Gastrocnemius medialis (tissue), 4 donors: ENCODE measurements at regions of chr22 and their contacts with region 1.

Region 1: DNA sequence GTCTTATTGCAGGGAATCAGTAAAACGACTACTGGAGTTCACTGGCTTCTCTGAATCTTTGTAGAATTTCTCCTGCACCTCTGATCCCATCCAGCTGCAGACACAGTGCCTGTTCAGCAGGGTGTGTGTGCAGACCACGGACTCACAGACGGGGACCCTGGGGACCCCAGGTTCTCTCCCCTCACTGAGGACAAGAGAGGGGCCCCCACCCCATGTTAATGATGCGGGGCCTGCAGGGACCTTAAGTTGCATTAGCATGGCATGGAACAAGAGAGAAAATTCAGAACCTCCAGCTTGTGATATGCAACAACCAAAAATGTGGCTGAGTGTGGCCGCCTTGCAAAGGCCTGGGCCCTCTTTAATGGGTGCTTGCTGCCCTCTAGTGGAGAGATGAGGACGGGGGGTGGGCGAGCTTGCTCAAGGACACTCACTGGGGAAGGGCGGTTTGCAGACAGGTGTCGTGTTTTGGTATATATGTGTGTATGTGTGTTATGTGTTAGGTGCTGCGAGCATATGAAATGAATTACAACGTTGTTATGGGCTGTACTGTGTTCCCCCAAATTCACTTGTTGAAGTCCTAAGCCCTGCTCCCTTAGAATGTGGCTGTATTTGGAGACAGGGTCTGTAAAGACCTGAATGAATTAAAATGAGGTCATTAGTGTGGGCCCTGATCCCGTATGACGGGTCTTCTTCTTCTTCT is 84.4 kb upstream of the SEPTIN5 start:
- DNase-seq: peak; percentile 38 to 54
- ATAC-seq: peak; percentile 88 to 91
- H3K4me3 ChIP-seq: no peak overlapping the region
- H3K27ac ChIP-seq: no peak overlapping the region
- H3K4me1 ChIP-seq: no peaks in the 10 kb centered on the region
- H3K27me3 ChIP-seq: peaks cover 0 to 2% (median 0%) of the 10 kb centered on the region in 3 donors
- CTCF ChIP-seq: peak; percentile 85 to 94 (median 92)
- POLR2A ChIP-seq: no peak

Region 2: DNA sequence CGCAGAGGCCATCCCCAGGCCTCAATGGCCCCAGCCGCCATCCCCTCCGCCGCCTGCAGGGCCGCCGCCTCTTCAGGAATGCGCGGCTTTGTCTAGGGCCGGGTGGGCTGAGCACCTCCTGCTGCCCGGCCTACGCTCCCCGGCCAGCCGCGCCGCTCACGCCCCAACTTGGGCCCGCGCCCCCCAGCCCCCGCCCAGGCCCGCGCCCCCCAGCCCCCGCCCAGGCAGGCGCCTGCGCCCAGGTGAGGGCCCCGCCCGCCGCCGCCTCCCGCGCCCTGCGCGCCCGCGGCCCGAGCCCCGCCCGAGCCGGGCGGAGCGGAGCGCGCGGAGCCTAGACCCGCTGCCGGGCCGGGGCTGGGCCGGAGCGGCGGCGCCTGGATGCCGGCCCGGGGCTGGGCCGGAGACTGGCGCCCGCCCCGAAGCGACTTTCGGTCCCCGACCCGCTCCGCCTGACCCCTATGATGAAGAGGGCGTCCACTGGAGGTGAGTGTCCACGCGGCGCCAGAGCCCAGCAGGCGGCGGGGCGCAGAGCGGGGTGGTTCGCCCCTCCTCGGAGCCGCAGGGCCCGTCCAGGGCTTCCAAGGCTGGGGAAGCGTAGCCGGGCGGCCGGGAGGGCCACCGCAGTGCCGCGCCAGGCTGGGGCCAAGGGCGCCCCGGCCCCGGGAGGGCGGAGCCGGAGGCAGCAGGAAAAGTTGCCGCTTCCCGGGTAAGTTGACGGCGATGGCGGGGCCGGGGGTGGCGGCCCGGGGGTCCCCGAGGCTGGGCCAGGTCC is 659.5 kb before region 1 on chr22:
- in situ Hi-C with region 1: loop called in 2 of 4 experiments (anchors 25 kb)
- intact Hi-C with region 1: no loop called
- DNase-seq: no peak
- ATAC-seq: peak in 1 of 2 donors; percentile 15
- H3K4me3 ChIP-seq: peak overlapping the region; percentile 33 to 68 (median 54)
- H3K27ac ChIP-seq: no peak overlapping the region
- H3K4me1 ChIP-seq: no peaks in the 10 kb centered on the region
- H3K27me3 ChIP-seq: peaks cover 0 to 23% (median 14%) of the 10 kb centered on the region in 3 donors
- CTCF ChIP-seq: no peak
- POLR2A ChIP-seq: no peak

Region 3: DNA sequence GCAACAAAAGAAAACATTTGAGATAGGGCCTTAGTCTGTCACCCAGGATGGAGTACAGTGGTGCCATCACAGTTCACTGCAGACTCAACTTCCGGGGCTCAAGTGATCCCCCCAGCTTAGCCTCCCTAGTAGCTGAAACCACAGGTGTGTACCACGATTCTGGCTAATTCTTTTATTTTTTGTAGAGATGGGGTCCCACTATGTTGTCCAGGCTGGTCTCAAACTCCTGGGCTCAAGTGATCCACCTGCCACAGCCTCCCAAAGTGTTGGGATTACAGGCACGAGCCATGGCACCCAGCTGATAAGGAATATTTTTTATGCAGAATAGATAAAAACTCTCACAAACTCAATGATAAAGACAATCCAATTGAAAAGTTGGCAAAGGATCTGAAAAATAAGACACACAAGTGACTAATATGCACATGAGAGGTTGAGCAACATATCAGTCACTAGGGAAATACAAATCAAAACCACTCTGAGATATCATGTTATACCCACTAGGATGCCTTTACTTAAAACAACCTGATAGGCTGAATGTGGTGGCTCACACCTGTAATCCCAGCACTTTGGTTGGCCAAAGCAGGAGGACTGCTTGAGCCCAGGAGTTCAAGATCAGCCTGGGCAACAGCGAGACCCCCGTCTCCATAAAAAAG is 304.4 kb before region 1 on chr22:
- in situ Hi-C with region 1: loop called in 1 of 4 experiments (anchors 25 kb)
- intact Hi-C with region 1: no loop called
- DNase-seq: no peak
- ATAC-seq: peak; percentile 81 to 92
- H3K4me3 ChIP-seq: no peak overlapping the region
- H3K27ac ChIP-seq: peak overlapping the region in 1 of 4 donors; percentile 57
- H3K4me1 ChIP-seq: peaks cover 0 to 8% of the 10 kb centered on the region in 2 donors
- H3K27me3 ChIP-seq: no peaks in the 10 kb centered on the region
- CTCF ChIP-seq: no peak
- POLR2A ChIP-seq: no peak

Region 4: GRCh38 chr22:19432133-19432851 is 197.6 kb before region 1 on chr22 and contains the start of gene MRPL40:
- in situ Hi-C with region 1: no loop called
- intact Hi-C with region 1: loop called (anchors 10 kb)
- DNase-seq: peak; percentile 93
- ATAC-seq: peak; percentile 77 to 79
- H3K4me3 ChIP-seq: peak within 1 kb of the TSS; percentile 75 to 96 (median 88)
- H3K27ac ChIP-seq: peak within 1 kb of the TSS; percentile 91 to 100 (median 100)
- H3K4me1 ChIP-seq: peaks cover 31 to 37% of the 10 kb centered on the region in 2 donors
- H3K27me3 ChIP-seq: no peaks in the 10 kb centered on the region
- CTCF ChIP-seq: peak in 1 of 5 experiments; percentile 21
- POLR2A ChIP-seq: peak; percentile 91 to 95
- total RNA-seq, gene MRPL40: 53.8 to 75.1 (median 61.5) TPM

Region 5: DNA sequence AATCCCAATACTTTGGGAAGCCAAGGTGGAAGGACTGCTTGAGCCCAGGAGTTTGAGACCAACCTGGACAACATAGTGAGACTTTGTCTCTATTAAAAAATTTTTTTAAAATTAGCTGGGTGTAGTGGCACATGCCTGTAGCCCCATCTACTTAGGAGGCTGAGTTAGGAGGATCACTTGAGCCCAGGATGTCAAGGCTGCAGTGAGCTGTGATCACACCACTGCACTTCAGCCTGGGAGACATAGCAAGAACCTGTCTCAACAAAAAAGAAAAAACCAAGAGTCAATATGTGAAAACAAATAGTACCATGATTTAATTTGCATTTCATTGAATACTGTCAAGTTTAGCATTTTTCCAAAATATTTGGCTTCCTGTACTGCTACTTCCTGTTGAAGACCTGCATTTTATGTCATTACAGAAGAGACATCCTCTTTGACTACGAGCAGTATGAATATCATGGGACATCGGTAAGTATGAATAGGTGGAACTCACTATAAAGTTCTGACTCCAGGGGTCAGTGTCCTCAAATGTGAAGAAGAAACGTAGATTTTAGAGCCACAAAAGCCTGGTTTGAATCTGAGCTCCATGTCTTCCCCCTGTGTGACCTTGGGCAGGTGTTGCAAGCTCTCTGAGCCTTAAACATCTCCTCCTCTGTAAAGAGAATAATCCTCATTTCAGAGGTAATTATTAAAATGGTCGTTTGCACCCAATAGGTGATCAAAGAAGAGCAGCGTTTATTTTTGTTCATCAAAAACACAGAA is 134.1 kb before region 1 on chr22:
- in situ Hi-C with region 1: loop called in 3 of 4 experiments (anchors 5 to 10 kb)
- intact Hi-C with region 1: loop called (anchors 5 kb)
- DNase-seq: no peak
- ATAC-seq: no peak
- H3K4me3 ChIP-seq: no peak overlapping the region
- H3K27ac ChIP-seq: no peak overlapping the region
- H3K4me1 ChIP-seq: no peaks in the 10 kb centered on the region
- H3K27me3 ChIP-seq: no peaks in the 10 kb centered on the region
- CTCF ChIP-seq: peak in 4 of 5 experiments; percentile 10 to 38 (median 26)
- POLR2A ChIP-seq: no peak